T47D (cell line): ENCODE measurements at regions of chr3 and their contacts with region 1.

Region 1: DNA sequence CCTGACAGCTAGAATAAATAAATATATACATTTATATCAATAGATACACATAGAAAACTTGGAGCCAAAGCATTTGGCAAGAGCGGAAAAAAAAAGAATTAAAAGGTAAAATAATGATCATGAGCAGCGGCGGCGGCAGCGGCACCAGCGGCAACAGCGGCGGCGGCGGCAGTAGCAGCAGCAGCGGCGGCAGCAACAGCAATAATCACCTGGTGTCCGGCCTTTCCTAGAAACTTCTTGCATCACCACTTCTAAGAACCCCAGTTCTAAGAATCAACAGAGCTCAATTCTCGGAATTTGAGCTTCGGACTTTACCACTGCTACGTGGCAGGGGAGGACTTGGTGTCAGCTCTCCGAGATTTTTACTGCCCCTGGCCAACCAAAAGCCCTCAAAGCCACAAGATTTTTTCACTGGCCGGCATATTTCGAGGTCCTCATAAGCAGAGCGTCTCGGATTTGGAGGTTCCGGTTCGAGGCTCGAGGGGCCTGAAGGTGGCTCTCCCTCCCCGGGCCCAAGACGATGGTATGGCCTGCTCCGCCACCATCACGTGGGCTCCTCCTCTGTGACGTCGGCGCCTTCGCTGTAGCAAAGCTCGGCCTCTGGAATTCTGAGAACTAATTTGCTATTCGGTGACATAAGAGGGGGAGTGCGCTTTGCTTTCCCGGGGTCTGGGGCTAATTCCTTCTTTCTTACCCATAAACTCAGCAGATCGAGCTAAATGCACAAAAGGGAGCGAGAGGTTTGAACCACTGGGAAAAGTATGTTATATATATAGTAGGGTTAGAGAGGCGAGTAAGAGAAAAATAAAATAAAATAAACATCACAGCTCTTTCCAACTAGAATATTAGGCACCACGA is at the start of gene BCL6:
- DNase-seq: peak; percentile 86 to 100

Region 2: GRCh38 chr3:188037216-188037718 is 291.8 kb after region 1 on chr3:
- in situ Hi-C with region 1: loop called (anchors 25 kb)
- DNase-seq: peak in 1 of 2 experiments; percentile 95

Region 3: DNA sequence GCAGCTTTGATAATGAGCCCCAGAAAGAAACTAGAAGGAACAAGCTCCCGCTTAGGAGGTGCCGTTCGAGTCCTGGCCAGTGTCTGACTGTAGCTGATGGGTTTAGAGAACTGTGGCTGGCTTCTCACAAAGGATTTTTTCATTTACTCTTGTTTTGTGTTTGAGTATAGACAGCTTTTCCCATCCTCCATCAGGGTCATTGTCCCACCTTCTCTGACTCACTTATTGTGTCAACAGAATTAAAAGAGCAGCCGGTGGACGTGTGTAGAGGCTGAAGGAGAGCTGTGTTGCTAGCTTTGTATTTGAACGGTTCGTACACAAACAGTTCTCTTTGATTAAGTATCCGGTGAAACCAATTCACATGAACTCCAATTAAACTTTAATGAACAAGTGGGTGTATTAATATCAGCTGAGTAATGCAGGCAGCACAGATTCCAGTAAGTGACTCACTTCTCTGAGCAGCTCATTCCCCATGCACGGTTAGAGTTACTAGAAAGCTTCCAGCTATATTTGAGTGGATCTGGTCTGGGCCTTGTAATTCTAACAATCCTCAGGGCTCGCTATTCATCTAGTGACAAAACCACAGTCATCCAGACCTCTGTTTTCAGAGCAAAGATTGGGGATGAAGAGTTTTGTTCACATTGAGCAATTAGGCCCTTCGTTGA is 549.5 kb after region 1 on chr3:
- in situ Hi-C with region 1: loop called (anchors 25 kb)
- DNase-seq: no peak

Region 4: DNA sequence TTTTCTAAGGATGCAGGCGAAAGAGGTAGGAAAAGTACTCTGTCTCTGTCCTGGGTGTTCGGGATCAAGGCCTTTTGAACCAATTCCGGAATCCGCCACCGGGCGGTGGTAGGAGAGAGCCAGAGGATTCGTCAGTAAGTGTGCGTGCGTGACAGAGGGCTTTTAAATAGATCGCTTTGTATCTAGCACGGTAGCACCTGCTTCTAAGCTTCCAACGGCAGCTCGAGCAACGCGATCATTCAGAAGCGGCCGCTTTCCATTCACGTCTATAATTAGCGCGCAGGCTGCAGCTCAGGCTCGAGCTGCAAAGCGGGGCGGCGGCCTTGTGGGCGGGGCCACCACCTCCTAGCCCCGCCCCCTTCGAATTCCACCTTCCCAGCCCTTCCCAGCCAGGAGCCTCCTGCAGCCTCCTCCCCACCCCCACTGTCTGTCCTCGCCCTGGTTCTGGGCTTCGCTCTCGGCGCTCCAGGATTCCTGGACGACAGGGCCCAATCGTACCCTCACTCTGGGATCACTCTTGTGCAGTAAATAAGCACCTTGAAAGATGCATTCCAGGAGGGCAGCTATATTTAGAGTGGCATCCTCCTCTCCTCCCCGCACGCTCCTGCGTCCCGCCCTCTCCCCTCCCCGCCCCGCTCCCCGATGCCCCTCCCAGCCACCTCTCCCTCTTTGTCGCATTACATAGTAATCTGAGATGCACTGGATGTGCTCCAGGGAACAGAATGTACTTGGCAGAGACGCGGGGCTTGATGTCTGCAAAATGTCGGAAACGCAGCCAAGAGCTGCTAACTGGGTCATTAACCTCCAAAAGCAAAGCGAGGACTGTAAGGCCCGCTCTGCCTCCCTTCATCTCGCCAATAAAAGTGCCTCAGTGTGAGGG is 1202.2 kb after region 1 on chr3:
- in situ Hi-C with region 1: loop called (anchors 25 kb)
- DNase-seq: peak; percentile 87 to 97